Activated CD4-positive, alpha-beta T cell treated with anti-CD3 and anti-CD28 coated beads for 36 hours (primary cell): ENCODE measurements at regions of chr4 and their contacts with region 1.

Region 1: GRCh38 chr4:158259955-158260575 is 49.8 kb downstream of the TMEM144 start:
- DNase-seq: no peak
- ATAC-seq: no peak
- H3K4me3 Mint-ChIP-seq: no peak overlapping the region
- H3K27ac Mint-ChIP-seq: no peak overlapping the region
- H3K4me1 Mint-ChIP-seq: no peaks in the 10 kb centered on the region
- H3K27me3 Mint-ChIP-seq: peaks cover 7% of the 10 kb centered on the region

Region 2: DNA sequence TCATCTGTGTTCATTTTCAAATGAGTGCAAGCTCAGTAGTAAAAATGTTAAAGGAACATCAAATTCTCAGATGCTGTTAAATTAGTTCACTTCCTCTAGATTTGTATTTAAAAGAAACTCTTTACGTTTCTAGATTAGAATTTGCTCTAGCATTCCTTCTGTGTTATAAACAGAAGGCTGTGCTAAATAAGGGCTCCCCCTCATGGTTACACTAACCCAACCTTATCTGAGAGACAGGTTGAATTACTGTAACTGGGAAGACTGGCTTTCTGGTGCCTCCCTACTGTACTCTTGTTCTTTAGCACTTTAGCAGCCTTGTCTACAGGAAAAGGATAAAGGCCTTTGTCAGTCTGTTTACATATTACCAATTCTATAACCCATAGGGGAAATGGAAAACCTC is 318.4 kb after region 1 on chr4:
- CTCF ChIA-PET with region 1: interaction called, 3 read pairs
- POLR2A ChIA-PET with region 1: no interaction called
- intact Hi-C with region 1: loop called in 1 of 2 experiments (anchors 5 kb)
- DNase-seq: no peak
- ATAC-seq: no peak
- H3K4me3 Mint-ChIP-seq: no peak overlapping the region
- H3K27ac Mint-ChIP-seq: no peak overlapping the region
- H3K4me1 Mint-ChIP-seq: no peaks in the 10 kb centered on the region
- H3K27me3 Mint-ChIP-seq: peaks cover 2% of the 10 kb centered on the region